Testis (tissue), 5 donors: ENCODE measurements at regions of chr6 and their contacts with region 1.

Region 1: DNA sequence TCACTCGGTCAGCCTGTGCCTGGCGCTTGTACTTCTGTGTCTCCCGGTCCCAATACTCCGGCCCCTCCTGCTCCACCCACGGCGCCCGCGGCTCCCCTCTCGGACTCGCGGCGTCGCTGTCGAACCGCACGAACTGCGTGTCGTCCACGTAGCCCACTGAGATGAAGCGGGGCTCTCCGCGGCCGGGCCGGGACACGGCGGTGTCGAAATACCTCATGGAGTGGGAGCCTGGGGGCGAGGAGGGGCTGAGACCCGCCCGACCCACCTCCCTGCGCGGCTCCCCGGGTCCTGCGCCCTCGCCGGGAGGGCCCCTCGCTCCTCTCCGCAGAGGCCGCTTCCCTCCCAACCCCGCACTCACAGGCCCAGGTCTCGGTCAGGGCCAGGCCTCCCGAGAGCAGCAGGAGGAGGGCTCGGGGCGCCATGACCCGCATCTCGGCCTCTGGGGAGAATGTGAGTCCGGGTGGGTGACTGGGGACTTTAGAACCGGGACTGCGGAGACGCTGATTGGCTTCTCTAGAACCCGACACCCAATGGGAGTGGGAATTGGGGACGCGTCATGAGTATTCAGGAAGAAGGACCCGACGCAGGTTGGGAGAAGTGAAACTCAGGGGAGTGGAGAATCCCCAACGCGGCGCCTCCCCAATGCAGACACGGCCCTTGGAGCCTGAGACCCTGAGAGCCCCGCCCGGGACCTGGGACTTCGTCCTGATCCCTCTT is at the start of gene HLA-C:
- DNase-seq: peak; percentile 96
- H3K4me3 ChIP-seq: peak within 1 kb of the TSS; percentile 76
- H3K27ac ChIP-seq: peak within 1 kb of the TSS; percentile 81 to 95
- H3K4me1 ChIP-seq: no peaks in the 10 kb centered on the region
- H3K27me3 ChIP-seq: no peaks in the 10 kb centered on the region
- CTCF ChIP-seq: no peak
- POLR2A ChIP-seq: peak; percentile 47
- total RNA-seq, gene HLA-C: 104 to 135 TPM

Region 2: DNA sequence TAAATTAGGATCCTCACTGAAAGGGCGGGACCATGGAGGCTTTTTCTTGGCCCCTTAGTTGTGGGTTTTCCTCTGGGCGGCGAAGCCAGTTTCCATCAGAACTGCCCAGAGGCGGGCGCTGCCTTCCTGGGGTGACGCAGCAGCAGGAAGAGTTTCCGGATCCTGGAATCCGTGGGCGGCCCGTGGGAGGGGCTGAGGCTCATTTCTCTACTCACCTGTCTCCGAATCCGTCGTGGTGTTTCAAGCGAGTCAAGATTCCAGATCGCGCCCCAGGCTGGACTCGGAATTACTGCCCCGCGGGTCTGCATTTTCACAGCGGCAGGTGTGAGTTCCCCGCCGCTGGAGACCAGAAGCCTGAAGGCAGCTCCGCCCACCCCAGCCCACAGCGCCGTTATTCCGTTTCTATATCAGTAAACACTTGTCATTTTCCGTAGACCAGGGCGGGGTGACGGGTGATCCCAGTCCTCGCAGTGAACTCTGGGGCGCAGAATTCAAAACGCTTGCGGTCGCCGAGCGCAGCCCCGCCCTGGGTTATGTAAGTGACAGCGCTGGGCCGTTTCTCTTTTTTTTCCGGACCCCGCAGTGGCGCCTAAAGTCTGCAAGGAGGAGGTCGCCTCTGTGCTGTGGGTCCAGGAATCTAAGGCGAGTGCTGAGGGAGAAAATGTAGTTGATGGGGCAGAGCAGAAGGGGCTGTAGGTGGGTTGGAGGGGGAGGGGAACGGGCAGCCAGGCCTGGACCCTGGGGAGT is 74.1 kb before region 1 on chr6:
- intact Hi-C with region 1: no loop called
- DNase-seq: peak; percentile 93
- H3K4me3 ChIP-seq: peak overlapping the region; percentile 59 to 85
- H3K27ac ChIP-seq: peak overlapping the region; percentile 92 to 96
- H3K4me1 ChIP-seq: no peaks in the 10 kb centered on the region
- H3K27me3 ChIP-seq: no peaks in the 10 kb centered on the region
- CTCF ChIP-seq: no peak
- POLR2A ChIP-seq: peak; percentile 34

Region 3: DNA sequence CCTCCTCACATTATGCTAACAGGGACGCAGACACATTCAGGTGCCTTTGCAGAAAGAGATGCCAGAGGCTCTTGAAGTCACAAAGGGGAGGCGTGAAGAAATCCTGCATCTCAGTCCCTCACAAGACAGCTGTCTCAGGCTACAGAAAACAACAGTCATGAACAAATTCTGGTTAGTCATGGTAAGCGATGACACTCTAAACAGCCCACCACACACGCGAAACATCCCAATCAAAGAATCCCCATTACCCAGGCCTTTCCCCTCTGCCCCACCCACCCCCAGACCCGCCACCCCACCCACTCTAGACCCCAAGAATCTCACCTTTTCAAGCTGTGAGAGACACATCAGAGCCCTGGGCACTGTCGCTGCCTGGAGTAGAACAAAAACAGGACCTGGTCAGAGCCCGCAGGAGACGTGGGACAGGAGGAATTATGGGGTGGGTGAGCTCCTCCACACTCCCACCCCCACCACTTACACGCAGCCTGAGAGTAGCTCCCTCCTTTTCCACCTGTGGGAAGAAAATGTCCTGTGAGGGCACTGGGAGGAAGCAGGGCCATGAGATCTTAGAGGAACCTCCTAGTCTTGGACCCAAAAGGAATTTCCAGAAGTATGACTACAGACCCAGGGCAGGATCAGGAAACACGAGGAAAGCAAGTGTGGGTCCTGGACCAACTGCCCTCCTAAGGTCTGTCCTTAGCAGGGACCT is 82.5 kb after region 1 on chr6:
- intact Hi-C with region 1: loop called (anchors 2 kb)
- DNase-seq: no peak
- H3K4me3 ChIP-seq: no peak overlapping the region
- H3K27ac ChIP-seq: no peak overlapping the region
- H3K4me1 ChIP-seq: peaks cover 8% of the 10 kb centered on the region
- H3K27me3 ChIP-seq: no peaks in the 10 kb centered on the region
- CTCF ChIP-seq: no peak
- POLR2A ChIP-seq: no peak